Mammary epithelial cell (primary cell): ENCODE measurements at regions of chr9 and their contacts with region 1.

Region 1: DNA sequence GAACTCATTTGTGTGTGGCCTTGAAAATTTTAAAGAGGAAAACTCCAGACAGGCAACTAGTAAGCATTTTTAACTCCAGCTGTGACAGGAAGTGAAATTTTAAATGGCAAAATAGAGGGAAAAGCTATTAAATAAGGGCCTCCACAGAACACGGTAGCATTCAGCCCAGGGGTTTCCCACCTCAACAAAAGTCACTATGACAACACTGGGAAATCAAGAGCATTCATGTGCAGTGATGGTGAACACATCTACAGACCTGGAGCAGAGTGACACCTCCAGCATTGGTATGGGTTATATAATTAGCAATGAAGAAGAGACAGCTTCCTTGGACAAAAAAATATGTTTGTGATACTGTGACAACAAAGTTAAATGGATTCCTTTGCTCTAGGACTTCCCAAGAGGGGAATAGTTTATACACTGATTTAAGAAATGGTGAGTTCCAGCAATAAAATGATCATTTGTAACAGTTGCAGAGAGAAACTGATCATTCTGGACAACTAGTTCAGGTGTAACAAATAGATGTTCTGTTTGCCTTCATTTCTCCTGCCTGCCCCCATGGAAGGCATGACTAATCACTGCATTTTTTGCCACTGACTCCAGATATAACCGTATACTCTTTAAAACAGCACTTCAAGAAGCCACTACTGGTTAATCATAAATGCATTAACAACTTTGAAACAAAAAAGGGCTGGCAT is 93.3 kb upstream of the SLC44A1 start:
- DNase-seq: peak; percentile 59
- H3K4me3 ChIP-seq: no peak overlapping the region
- H3K27ac ChIP-seq: no peak overlapping the region
- H3K4me1 ChIP-seq: peaks cover 17% of the 10 kb centered on the region
- H3K27me3 ChIP-seq: no peaks in the 10 kb centered on the region
- CTCF ChIP-seq: no peak

Region 2: GRCh38 chr9:104968025-104968982 is 182.8 kb before region 1 on chr9:
- CTCF ChIA-PET with region 1: no interaction called
- dilution Hi-C with region 1: no loop called
- in situ Hi-C with region 1: no loop called
- intact Hi-C with region 1: loop called (anchors 5 kb)
- DNase-seq: peak; percentile 71
- H3K4me3 ChIP-seq: peak overlapping the region; percentile 63 to 93 (median 72)
- H3K27ac ChIP-seq: no peak overlapping the region
- H3K4me1 ChIP-seq: peaks cover 8% of the 10 kb centered on the region
- H3K27me3 ChIP-seq: no peaks in the 10 kb centered on the region
- CTCF ChIP-seq: no peak